ENCODE measurements at regions of chr5 and their contacts with region 1.

Region 1: DNA sequence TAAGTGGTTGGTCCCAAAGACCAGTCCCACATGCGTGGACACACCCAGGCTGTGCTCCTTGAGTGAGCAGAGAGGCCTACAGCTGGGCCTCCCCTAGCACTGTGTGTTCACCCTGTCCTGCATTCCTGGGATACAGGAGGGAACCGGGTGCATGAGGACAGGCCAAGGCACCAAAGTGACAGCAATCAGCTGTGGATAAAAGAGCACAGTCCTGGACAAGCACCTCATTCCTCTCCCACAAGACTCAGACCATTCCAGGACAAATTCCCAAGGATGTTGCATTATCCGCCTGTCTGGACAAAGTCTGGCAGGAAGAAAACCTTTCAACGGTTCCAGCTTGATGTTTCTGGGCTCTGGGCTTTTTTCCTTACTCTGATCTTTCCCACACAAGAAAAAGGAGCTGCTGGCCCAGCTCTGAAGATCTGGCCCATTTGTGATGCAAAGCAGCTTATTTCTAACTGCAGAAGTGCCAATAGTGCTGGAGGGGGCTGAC is 273.2 kb downstream of the ENC1 start:
- DNase-seq: no peak

Region 2: GRCh38 chr5:74122979-74123590 is 244.2 kb before region 1 on chr5:
- intact Hi-C with region 1: no loop called
- DNase-seq: no peak

Region 3: DNA sequence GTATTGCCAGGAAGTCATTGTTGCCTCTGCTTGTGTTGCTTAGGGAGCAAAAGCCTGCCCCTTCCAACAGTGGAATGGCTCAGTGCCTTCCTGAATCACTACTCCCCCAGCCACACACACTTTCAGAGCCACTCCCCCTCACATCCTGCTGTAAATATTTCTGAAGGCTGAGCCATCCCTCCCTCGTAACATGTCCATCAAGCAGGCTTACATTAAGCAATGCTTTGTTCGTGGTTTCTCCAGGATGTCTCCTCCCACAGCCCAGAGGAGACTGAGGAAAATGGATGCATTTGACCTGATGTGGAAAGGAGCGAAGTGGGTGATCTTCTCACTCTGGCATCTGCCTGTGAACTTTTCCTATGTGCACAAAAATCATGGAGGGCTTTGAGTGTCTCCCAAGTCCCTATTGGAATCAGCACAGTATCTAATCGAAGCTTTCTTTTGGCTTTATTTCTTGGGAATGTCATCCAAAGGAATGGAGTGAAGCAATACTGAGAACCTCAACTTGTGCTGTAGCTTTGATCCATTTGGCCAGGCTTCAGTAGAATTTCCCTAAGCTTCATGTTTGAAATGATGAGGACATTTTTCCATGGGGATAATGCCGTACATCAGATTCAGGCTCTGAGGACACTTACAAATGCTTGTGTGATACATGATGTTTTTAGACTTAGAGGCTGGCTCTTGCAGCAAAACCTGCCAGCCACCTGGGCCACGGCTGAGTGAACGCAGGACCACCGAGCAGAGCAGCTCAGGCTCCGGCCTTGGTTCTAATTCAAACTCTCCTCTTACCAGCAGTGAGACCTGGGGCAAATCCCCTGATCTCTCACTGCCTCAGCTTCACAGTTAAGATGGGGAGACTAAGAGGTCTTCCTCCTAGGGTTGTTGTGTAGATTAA is 115.9 kb before region 1 on chr5:
- intact Hi-C with region 1: loop called in 1 of 2 experiments (anchors 10 kb)
- DNase-seq: no peak

Region 4: DNA sequence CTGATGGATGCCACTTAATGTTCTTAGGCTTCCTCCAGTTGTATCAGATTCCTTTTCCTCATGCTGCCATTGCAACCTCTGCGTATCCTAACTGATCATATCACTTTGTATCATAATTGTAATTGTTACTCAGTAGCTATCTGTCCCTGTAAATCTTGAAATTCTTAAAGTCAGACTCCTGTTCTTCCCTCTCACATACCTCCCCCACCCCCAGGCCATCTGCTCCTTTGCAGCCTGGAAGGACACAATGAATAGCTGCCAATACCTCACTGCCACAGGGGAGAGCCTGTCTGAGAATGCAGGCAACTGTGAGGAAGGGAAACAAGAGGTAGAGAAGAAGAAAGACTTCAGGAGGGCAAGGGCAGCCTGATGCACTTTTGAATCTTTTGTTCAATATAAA is 44.8 kb after region 1 on chr5:
- intact Hi-C with region 1: loop called in 1 of 2 experiments (anchors 1 kb)
- DNase-seq: no peak

Region 5: DNA sequence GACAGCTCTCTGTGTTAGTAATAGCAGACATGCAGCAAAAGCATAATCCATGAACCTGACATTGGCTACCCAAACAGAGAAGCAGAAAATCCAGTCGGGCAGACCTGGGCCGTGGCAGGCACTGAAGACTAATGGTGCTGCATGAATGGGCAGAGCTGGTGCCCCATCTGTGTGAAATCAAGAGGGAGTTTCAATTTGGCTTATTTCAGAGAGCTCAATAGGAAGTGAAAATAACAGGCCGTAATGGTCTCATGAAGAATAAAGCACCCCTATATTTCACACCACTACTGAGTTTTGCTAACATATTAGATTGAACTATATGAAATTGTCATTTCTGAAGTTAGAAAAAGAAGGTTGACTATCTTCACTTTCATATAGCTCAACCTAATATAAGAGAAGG is 123.5 kb after region 1 on chr5:
- intact Hi-C with region 1: no loop called
- DNase-seq: no peak